ENCODE measurements at regions of chr3 and their contacts with region 1.

Region 1: DNA sequence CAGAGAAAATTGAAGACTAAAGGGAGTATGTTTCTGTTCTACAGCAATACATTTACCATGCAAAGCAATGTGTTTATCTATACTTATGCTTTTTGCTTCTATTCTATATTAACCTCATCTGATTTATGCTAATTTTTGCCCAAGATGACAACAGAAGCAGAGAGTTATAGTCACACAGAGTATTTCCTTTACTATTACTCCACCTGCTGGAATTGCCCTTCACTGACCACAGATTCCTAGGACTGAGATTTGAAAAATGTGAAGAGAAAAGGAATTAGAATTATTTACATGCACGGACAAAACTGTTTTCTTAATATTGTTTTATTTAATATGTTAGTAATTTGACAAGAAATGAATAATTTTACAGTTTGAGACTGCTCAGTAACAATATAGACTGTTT is 745.6 kb downstream of the VGLL3 start:
- DNase-seq: peak; percentile 42
- ATAC-seq: peak; percentile 71
- H3K4me3 ChIP-seq: no peak overlapping the region
- H3K27ac ChIP-seq: no peak overlapping the region
- H3K4me1 ChIP-seq: 0 out of 2 replicates have a peak, but pooled peaks cover 3% of the 10 kb centered on the region
- H3K27me3 ChIP-seq: no peaks in the 10 kb centered on the region
- CTCF ChIP-seq: peak; percentile 63

Region 2: DNA sequence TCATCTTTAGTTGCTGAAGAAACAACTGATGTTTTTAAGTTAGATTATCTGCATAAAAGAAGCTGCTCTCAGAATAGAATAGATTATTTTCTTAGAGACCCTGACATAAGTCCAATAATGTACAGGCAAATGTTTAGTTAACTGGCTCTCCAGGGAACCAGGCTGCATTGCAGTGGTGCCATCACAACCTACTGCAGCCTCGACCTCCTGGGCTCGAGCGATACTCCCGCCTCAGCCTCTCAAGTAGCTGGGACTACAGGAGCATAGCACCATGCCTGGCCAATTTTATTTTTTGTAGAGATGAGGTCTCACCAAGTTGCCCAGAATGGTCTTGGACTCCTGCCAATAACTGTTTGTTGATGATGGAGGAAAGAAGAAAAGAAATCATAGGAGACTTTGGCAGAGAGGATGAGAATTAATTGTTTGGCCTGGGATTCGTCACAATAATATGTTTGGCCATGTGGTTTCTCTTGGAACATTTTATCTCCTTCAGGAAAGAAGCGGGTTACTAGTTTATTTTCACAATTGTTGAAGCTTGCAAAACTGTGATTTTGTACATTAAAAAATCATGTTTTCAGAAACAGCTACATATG is 857.4 kb before region 1 on chr3:
- CTCF ChIA-PET with region 1: no interaction called
- POLR2A ChIA-PET with region 1: no interaction called
- intact Hi-C with region 1: loop called (anchors 10 kb)
- DNase-seq: no peak
- ATAC-seq: no peak
- H3K4me3 ChIP-seq: no peak overlapping the region
- H3K27ac ChIP-seq: no peak overlapping the region
- H3K4me1 ChIP-seq: no peaks in the 10 kb centered on the region
- H3K27me3 ChIP-seq: peaks cover 5% of the 10 kb centered on the region; the same call in 1 of the 2 replicates
- CTCF ChIP-seq: no peak

Region 3: DNA sequence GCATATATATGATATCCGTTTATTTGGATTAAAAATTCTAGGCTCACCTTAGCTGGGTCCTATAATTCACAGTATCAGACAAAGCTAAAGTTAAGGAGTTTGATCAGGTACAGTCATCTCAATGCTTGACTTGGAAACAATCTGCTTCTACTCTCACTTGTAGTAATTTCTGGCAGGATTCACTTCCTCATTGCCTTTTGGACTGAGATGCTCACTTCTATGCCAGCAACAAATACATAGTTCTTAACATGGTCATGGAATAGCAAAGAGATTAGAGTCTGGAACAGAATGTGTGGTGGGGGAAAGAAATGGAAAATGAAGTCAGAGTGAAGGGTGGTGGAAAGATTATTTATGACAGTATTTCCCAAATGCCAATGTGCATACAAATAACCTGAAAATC is 593.0 kb before region 1 on chr3:
- CTCF ChIA-PET with region 1: no interaction called
- POLR2A ChIA-PET with region 1: no interaction called
- intact Hi-C with region 1: no loop called
- DNase-seq: no peak
- ATAC-seq: no peak
- H3K4me3 ChIP-seq: no peak overlapping the region
- H3K27ac ChIP-seq: no peak overlapping the region
- H3K4me1 ChIP-seq: no peaks in the 10 kb centered on the region
- H3K27me3 ChIP-seq: no peaks in the 10 kb centered on the region
- CTCF ChIP-seq: no peak

Region 4: GRCh38 chr3:86180696-86181095 is 64.7 kb before region 1 on chr3:
- CTCF ChIA-PET with region 1: interaction called, 6 read pairs
- POLR2A ChIA-PET with region 1: no interaction called
- intact Hi-C with region 1: loop called (anchors 1 kb)
- DNase-seq: peak; percentile 68
- ATAC-seq: peak; percentile 98
- H3K4me3 ChIP-seq: no peak overlapping the region
- H3K27ac ChIP-seq: no peak overlapping the region
- H3K4me1 ChIP-seq: no peaks in the 10 kb centered on the region
- H3K27me3 ChIP-seq: no peaks in the 10 kb centered on the region
- CTCF ChIP-seq: peak; percentile 65